G401 (cell line): ENCODE measurements at regions of chr1 and their contacts with region 1.

Region 1: GRCh38 chr1:220067269-220068204 is 21.2 kb upstream of the EPRS1 start:
- DNase-seq: no peak

Region 2: DNA sequence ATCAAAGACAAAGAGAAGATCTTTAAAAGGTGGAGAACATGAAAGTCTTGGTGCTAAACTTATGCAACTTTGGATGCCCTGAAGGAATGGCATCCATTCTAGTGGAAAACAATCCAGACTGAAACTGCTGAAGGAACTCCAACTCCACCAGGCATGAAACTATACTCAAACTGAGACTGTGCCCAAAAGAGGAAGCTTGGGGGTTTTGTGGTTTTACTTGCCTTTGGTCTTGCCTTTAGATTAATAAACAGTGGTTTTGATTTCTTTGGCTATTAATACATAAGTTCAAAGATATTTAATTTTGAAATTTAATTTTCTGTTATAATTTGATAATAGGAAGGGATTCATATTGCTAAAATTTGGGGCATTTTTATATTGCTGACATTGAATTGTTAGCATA is 121.7 kb before region 1 on chr1:
- in situ Hi-C with region 1: no loop called
- DNase-seq: no peak

Region 3: DNA sequence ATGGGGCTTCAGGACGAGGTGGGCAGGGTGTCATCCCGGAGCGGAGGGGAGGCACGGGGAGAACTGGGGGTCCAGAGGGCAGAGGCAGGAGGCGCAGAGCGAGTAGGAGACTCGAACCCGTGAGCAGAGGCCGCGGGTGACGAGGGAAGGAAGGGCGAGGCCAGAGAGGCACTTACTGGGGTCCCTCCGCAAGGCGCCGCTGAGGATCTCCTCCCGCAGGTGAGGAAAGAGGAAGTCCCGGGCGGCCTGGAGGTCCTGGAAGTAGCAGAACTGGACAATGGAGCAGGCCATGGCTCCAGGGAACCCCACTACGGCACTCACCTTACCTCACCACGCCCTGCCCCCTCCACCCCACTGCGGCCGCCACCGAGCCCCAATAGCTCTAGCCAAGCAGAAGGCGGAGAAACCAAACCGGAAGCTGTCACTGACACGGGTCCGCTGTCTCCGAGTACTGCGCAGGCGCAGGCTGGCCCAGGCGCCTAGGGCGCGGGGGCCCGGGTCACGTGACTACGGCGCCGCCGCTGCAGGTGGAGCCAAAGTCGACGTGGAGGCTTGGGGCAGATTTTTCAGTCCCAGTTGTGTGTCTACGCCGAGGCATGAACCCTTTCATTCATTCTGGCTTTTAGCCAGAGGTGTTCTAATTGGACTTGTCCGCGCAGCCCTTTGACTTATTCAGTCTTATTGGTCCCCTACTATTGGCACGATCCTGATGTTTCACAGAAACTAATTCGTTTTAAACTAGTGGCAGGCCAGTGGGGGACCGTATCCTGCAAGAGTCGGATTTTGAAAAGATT is 204.7 kb after region 1 on chr1 and contains the start of gene RAB3GAP2:
- in situ Hi-C with region 1: loop called (anchors 10 kb)
- DNase-seq: peak; percentile 91
- total RNA-seq, gene RAB3GAP2: 10.6 and 17.8 TPM in 2 replicates